HCT116 (cell line): ENCODE measurements at regions of chr2 and their contacts with region 1.

Region 1: GRCh38 chr2:217785544-217786045 is 217.2 kb downstream of the TNS1 start:
- DNase-seq: peak; percentile 49
- ATAC-seq: peak; percentile 86
- H3K4me3 ChIP-seq: no peak overlapping the region
- H3K27ac ChIP-seq: no peak overlapping the region
- H3K4me1 ChIP-seq: peaks cover 0 to 3% of the 10 kb centered on the region in 2 experiments; a peak in 2 of 4 replicates
- H3K27me3 ChIP-seq: no peaks in the 10 kb centered on the region
- CTCF ChIP-seq: peak; percentile 92 to 97 (median 93)
- POLR2A ChIP-seq: no peak
- RAD21 ChIP-seq: peak; percentile 99

Region 2: DNA sequence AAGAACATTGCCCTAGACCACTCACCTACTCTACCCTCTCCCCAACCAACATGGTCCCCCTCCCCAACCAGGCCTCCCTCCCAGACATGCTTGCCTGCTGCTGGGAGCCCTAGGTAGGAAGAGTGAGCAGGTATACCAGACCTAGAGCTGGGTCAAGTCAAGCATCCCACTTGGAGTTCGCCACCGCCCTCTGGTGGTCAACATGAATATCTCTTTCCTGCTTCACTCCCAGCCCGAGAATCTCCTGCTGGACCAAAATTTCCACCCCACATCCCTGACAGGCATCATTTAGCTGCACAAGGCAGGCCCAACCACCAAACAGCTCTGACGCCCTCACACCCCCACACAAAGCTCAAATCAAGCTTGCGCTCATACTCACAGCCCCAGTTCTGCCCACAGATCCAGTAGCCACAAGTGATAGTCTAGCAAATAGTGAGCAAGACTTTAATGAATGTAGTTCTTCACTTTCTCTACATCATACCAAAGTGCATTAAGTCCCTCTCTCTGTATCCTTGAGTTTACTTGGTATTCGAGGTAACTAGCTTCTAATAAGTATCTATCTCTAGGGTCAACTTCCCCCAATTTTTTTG is 101.2 kb after region 1 on chr2:
- CTCF ChIA-PET with region 1: interaction called, 54 read pairs
- POLR2A ChIA-PET with region 1: interaction called, 3 read pairs
- RAD21 ChIA-PET with region 1: interaction called, 7 to 13 read pairs
- intact Hi-C with region 1: loop called (anchors 1 kb)
- DNase-seq: peak; percentile 48
- ATAC-seq: peak; percentile 95
- H3K4me3 ChIP-seq: no peak overlapping the region
- H3K27ac ChIP-seq: no peak overlapping the region
- H3K4me1 ChIP-seq: no peaks in the 10 kb centered on the region
- H3K27me3 ChIP-seq: no peaks in the 10 kb centered on the region
- CTCF ChIP-seq: peak; percentile 69 to 89 (median 81)
- POLR2A ChIP-seq: no peak
- RAD21 ChIP-seq: peak; percentile 95

Region 3: GRCh38 chr2:217988014-217988839 is 202.6 kb after region 1 on chr2:
- CTCF ChIA-PET with region 1: interaction called, 35 read pairs
- POLR2A ChIA-PET with region 1: interaction called, 4 read pairs
- RAD21 ChIA-PET with region 1: interaction called in 1 of 2 experiments, 5 read pairs
- intact Hi-C with region 1: loop called (anchors 1 kb)
- DNase-seq: peak; percentile 78
- ATAC-seq: peak; percentile 91
- H3K4me3 ChIP-seq: peak overlapping the region; percentile 6 to 46
- H3K27ac ChIP-seq: peak overlapping the region; percentile 21; the same call in 1 of the 2 replicates
- H3K4me1 ChIP-seq: peaks cover 10 to 17% of the 10 kb centered on the region in 2 experiments
- H3K27me3 ChIP-seq: no peaks in the 10 kb centered on the region
- CTCF ChIP-seq: peak; percentile 79 to 85 (median 84)
- POLR2A ChIP-seq: no peak
- RAD21 ChIP-seq: peak; percentile 89

Region 4: DNA sequence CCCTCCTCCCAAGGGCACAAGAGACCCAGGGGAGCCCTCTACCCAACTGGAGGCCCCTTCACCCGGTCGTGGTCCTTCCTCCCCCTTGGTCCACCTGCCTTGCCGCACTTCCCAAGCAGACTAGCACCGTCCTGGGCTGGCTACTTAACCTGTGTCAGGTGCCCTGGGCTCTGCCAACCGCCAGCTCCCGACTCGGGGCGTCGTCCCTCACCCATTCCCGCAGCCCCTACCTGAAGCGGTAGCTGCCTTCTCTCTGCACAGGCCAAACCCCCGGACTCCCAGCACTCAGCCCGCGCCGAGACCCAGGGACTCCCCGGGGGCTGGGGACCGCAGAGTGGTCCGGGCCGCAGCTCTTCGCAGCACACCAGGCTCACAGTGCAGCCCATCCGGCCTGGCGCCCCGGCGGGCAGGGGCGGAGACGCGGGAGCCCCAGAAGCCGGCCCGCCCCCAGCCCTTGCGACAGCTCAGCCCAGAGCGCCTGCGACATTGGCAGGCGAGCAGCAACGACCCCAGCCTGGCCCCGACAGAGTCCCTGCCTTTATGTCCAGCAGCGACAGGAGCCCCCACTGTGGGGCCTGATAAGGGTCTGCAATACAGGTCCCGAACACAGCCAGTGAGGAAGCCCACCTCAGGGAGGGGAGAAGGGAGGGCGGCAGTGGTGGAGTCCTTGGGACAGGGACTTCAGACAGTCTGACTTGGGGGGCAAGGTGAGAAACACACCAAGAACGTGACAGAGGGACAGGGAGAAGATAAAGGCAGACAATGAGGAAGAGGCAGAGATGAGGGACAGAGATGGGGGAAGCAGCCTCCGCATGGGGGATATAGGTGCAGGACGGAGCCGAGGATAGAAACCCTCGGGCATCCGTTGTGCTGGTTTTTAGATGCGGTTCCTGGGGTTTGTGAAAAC is 248.2 kb after region 1 on chr2:
- CTCF ChIA-PET with region 1: interaction called, 23 read pairs
- POLR2A ChIA-PET with region 1: interaction called, 5 read pairs
- RAD21 ChIA-PET with region 1: interaction called, 3 to 9 read pairs
- intact Hi-C with region 1: loop called (anchors 1 kb)
- DNase-seq: no peak
- ATAC-seq: no peak
- H3K4me3 ChIP-seq: no peak overlapping the region
- H3K27ac ChIP-seq: no peak overlapping the region
- H3K4me1 ChIP-seq: peaks cover 0 to 4% of the 10 kb centered on the region in 2 experiments; a peak in 1 of 4 replicates
- H3K27me3 ChIP-seq: peaks cover 20% of the 10 kb centered on the region
- CTCF ChIP-seq: no peak
- POLR2A ChIP-seq: no peak
- RAD21 ChIP-seq: no peak

Region 5: DNA sequence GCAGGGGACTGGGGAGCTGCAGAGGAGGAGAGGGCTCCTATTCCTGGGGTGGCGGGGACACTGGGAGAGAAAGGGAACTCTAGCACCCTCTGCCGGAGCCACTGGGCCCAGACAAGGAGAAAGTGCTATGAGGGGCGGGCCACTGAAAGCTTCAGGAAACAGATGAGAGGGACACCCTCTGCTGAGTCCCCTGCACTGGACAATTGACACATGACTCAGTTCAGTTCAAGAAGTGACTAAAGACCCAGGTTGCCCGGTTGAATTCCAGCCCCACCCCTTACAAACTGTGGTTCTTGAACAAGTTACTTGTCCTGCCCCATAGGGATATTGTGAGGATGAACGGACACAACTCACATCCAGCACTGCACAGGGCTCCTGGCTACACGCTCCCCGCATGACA is 288.4 kb after region 1 on chr2:
- CTCF ChIA-PET with region 1: interaction called, 53 read pairs
- POLR2A ChIA-PET with region 1: no interaction called
- RAD21 ChIA-PET with region 1: interaction called in 1 of 2 experiments, 4 read pairs
- intact Hi-C with region 1: no loop called
- DNase-seq: peak; percentile 7
- ATAC-seq: peak; percentile 94
- H3K4me3 ChIP-seq: no peak overlapping the region
- H3K27ac ChIP-seq: no peak overlapping the region
- H3K4me1 ChIP-seq: peaks cover 0 to 6% of the 10 kb centered on the region in 2 experiments; a peak in 2 of 4 replicates
- H3K27me3 ChIP-seq: no peaks in the 10 kb centered on the region
- CTCF ChIP-seq: peak; percentile 39 to 83 (median 77); a peak in 5 of 6 replicates
- POLR2A ChIP-seq: no peak
- RAD21 ChIP-seq: peak; percentile 40; the same call in 1 of the 2 replicates

Region 6: GRCh38 chr2:218322895-218323808 is 537.6 kb after region 1 on chr2:
- CTCF ChIA-PET with region 1: no interaction called
- POLR2A ChIA-PET with region 1: no interaction called
- RAD21 ChIA-PET with region 1: no interaction called
- intact Hi-C with region 1: no loop called
- DNase-seq: peak; percentile 46
- ATAC-seq: peak; percentile 79
- H3K4me3 ChIP-seq: peak overlapping the region; percentile 66 to 78
- H3K27ac ChIP-seq: peak overlapping the region; percentile 76
- H3K4me1 ChIP-seq: peaks cover 15 to 24% of the 10 kb centered on the region in 2 experiments
- H3K27me3 ChIP-seq: no peaks in the 10 kb centered on the region
- CTCF ChIP-seq: no peak
- POLR2A ChIP-seq: no peak
- RAD21 ChIP-seq: no peak